Activated CD8-positive, alpha-beta T cell treated with anti-CD3 and anti-CD28 coated beads for 36 hours (primary cell): ENCODE measurements at regions of chr12 and their contacts with region 1.

Region 1: GRCh38 chr12:118372541-118373495 is at the start of gene TAOK3:
- DNase-seq: peak; percentile 98
- ATAC-seq: peak; percentile 89
- H3K4me3 Mint-ChIP-seq: peak within 1 kb of the TSS; percentile 92
- H3K27ac Mint-ChIP-seq: peak within 1 kb of the TSS; percentile 91
- H3K4me1 Mint-ChIP-seq: peaks cover 35% of the 10 kb centered on the region
- H3K27me3 Mint-ChIP-seq: no peaks in the 10 kb centered on the region
- CTCF ChIP-seq: no peak
- total RNA-seq, gene TAOK3: 46.0 to 47.1 TPM

Region 2: GRCh38 chr12:118135788-118136558 is 236.8 kb before region 1 on chr12 and contains the start of gene PEBP1:
- CTCF ChIA-PET with region 1: interaction called, 17 read pairs
- POLR2A ChIA-PET with region 1: interaction called, 6 read pairs
- intact Hi-C with region 1: loop called (anchors 10 kb)
- DNase-seq: peak; percentile 95
- ATAC-seq: peak; percentile 99
- H3K4me3 Mint-ChIP-seq: peak within 1 kb of the TSS; percentile 93
- H3K27ac Mint-ChIP-seq: peak within 1 kb of the TSS; percentile 91
- H3K4me1 Mint-ChIP-seq: peaks cover 31% of the 10 kb centered on the region
- H3K27me3 Mint-ChIP-seq: no peaks in the 10 kb centered on the region
- CTCF ChIP-seq: no peak
- total RNA-seq, gene PEBP1: 122 to 128 TPM

Region 3: GRCh38 chr12:118183705-118184104 is 189.1 kb before region 1 on chr12:
- CTCF ChIA-PET with region 1: interaction called, 107 read pairs
- POLR2A ChIA-PET with region 1: interaction called, 7 read pairs
- intact Hi-C with region 1: loop called (anchors 2 kb)
- DNase-seq: no peak
- ATAC-seq: no peak
- H3K4me3 Mint-ChIP-seq: no peak overlapping the region
- H3K27ac Mint-ChIP-seq: peak overlapping the region; percentile 11
- H3K4me1 Mint-ChIP-seq: peaks cover 27% of the 10 kb centered on the region
- H3K27me3 Mint-ChIP-seq: no peaks in the 10 kb centered on the region
- CTCF ChIP-seq: no peak

Region 4: DNA sequence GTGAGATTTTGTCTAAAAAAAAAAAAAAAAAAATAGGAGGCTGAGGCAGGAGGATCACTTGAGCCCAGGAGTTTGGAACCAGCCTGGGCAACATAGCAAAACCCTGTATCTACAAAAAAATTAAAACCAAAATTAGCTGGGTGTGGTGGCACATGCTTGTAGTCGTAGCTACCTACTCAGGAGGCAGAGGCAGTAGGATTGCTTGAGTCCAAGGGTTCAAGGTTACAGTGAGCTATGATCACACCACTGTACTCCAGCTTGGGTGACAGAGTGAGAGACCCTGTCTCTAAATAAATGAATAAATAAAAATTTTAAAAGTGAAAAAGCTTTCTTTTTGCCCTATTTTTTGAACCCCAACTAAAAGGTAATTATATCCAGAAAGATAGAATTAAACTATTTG is 123.3 kb before region 1 on chr12:
- CTCF ChIA-PET with region 1: interaction called, 11 read pairs
- POLR2A ChIA-PET with region 1: no interaction called
- intact Hi-C with region 1: no loop called
- DNase-seq: no peak
- ATAC-seq: no peak
- H3K4me3 Mint-ChIP-seq: no peak overlapping the region
- H3K27ac Mint-ChIP-seq: no peak overlapping the region
- H3K4me1 Mint-ChIP-seq: no peaks in the 10 kb centered on the region
- H3K27me3 Mint-ChIP-seq: no peaks in the 10 kb centered on the region
- CTCF ChIP-seq: no peak

Region 5: DNA sequence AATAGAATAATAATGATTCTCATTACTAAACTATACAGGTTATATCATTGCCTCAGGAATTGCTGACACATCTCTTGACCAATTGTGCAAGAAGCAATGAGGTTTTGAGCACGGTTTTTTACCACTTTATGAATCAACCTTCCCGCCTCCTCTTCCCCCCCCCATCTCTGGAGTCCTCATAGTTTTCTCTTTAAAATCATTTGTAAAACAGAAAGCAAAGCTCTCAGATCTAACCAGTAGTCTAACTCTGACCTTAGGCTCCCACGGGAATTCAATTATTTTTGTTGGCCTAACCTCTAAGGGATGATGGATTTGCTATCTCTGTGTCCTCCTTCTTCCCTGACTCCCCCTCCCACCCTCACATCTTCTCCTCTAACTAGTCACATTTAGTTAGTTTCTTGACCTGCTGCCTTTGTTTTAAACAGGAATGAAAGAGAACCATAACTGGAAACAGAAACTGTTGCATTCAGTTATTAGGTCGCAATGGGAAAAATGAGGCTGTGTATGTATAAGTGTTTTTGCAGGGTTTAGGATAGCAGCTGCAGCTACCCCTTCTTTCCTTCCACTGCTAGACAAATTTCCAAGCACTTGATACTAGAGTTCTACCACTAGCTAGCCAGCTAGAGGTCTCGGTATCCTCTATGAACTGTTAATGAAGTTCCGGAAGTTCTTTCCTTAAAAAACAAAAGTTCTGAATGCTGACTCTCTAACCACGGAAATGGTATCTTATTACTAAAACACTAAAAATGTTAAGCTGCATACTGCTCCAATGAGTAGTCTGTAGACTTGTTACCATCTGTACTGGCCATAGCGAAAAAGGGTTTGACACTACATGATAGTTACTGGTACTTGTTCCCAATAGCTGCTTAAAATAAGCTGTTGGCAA is 65.5 kb before region 1 on chr12:
- CTCF ChIA-PET with region 1: interaction called, 11 read pairs
- POLR2A ChIA-PET with region 1: interaction called, 3 read pairs
- intact Hi-C with region 1: loop called (anchors 5 kb)
- DNase-seq: peak; percentile 77
- ATAC-seq: peak; percentile 74
- H3K4me3 Mint-ChIP-seq: peak overlapping the region; percentile 70
- H3K27ac Mint-ChIP-seq: peak overlapping the region; percentile 81
- H3K4me1 Mint-ChIP-seq: peaks cover 48% of the 10 kb centered on the region
- H3K27me3 Mint-ChIP-seq: no peaks in the 10 kb centered on the region
- CTCF ChIP-seq: no peak

Region 6: GRCh38 chr12:118325081-118325480 is 47.7 kb before region 1 on chr12:
- CTCF ChIA-PET with region 1: no interaction called
- POLR2A ChIA-PET with region 1: no interaction called
- intact Hi-C with region 1: no loop called
- DNase-seq: no peak
- ATAC-seq: no peak
- H3K4me3 Mint-ChIP-seq: no peak overlapping the region
- H3K27ac Mint-ChIP-seq: no peak overlapping the region
- H3K4me1 Mint-ChIP-seq: peaks cover 18% of the 10 kb centered on the region
- H3K27me3 Mint-ChIP-seq: no peaks in the 10 kb centered on the region
- CTCF ChIP-seq: no peak

Region 7: DNA sequence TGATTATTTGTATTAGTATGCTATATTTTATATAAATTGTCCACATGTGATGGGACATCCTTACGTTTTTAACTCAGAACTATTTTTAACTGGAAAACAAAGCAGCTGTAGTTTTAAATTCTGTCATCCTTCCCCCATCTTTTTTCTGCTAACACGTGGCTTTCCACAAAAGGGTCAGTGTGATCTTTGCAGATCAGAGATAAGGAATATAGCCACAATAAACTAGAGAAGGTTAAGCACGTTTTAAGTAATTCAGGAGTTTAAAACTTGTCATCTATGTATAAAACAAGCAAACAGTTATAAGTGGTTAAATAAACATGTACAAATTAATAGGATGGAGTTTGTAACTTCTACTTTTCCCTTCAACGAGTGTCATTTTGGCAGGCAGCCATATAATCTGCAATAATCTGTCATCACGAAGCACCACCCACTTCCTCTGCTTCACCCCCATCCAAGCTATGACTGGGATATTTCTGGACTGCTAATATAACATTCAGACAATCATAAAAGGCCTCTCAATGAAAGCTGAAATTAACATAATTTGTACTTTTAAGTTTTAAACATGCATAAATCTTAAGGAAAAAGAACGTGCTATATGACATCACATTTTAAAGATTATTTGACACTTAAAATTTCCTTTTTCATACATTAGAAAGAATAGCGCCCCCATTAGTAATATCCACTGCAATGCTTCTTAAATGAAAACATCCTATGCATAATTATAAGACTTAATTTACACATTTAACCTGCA is 15.4 kb before region 1 on chr12:
- CTCF ChIA-PET with region 1: interaction called, 129 read pairs
- POLR2A ChIA-PET with region 1: interaction called, 9 read pairs
- intact Hi-C with region 1: no loop called
- DNase-seq: peak; percentile 77
- ATAC-seq: peak; percentile 81
- H3K4me3 Mint-ChIP-seq: peak overlapping the region; percentile 88
- H3K27ac Mint-ChIP-seq: peak overlapping the region; percentile 96
- H3K4me1 Mint-ChIP-seq: peaks cover 46% of the 10 kb centered on the region
- H3K27me3 Mint-ChIP-seq: no peaks in the 10 kb centered on the region
- CTCF ChIP-seq: peak; percentile 72